Posterior vena cava (tissue), 2 donors: ENCODE measurements at regions of chr6 and their contacts with region 1.

Region 1: GRCh38 chr6:101956961-101957360 is 563.5 kb downstream of the GRIK2 start:
- DNase-seq: no peak

Region 2: DNA sequence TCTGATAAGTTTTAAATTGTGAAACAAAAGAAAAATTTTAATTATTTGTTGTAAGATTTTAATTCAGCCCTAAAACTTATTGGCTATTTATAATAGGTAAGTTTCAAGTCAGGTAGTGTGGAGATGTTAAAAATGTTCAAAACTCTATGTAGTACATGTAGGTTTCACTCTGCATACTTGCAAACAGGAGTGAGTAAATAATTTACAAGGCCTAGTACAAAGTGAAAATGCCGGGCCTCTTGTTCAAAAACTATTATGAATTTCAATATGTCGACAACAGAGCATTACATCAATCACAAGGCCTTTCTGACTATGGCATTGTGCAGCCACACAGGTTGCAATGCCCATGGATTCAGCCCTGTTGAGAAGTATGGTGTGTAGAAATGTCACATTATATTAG is 644.3 kb before region 1 on chr6:
- intact Hi-C with region 1: loop called in 1 of 2 experiments (anchors 5 kb)
- DNase-seq: no peak